H1 (cell line): ENCODE measurements at regions of chr7 and their contacts with region 1.

Region 1: DNA sequence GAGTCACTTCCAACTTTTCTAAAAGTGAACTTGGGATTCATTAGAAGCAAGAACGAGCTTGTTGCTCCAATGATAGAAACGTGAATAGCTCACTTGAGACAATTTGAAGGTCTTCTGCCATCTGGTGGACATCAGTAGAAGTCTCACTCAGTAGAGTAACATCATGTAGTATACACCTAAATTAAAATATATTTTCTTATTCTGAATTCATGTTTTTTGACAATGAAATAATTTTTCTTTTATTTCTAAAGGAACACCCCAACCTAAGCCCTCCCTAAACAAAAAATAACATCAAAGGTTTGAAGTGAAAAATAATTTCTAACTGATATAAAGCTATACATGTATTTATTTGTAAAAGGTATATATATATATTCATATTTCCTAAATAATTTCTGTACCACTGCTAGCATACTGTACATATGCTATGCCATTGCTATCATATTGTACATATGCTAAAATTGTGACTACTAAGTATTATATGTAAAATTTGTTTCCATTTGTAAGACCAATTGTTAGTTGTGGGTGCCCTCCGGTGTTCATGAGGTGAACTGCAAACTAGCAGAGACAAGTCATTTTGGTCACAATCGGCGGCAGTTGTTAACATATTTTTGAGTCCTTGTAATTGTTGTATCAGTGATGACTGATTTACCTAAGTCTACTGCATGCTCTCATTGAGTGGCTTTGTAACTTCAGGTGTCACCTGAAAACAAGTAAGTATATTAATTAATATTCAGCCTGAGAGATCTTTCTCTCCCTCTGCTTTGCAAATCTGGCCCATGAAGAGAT is 121.9 kb downstream of the PTPRZ1 start:
- DNase-seq: peak; percentile 29 to 68
- H3K4me3 ChIP-seq: no peak overlapping the region
- H3K27ac ChIP-seq: no peak overlapping the region
- H3K4me1 ChIP-seq: no peaks in the 10 kb centered on the region
- H3K27me3 ChIP-seq: no peaks in the 10 kb centered on the region
- CTCF ChIP-seq: peak; percentile 43 to 82 (median 75)
- EP300 ChIP-seq: no peak
- POLR2A ChIP-seq: no peak
- RAD21 ChIP-seq: peak; percentile 92 to 94

Region 2: DNA sequence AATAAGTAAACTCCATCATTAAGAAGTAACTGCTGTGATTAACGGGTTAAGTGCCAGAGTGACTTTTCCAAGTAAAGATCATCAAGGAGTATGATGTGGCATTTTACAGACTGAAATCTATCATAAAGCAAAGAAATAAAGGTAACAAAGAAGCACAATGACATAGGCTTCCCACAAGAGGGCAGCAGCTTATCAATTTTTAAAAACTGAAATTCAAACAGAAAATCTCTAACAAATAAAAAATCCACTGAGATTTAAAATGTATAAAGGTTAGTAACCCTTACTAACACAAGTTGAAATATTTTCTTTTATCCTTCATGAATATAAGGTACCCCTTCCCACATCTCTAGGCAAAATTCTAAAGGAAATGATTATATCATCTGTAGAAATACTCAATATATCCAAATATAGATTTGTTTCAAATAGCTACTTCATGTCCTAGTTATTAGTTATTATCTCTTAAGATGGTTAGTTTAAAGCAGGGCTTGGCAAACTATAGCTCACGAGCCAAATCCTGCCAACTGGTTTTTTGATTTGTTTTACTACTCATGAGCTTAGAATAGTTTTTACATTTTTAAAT is 627.9 kb before region 1 on chr7:
- CTCF ChIA-PET with region 1: interaction called, 18 read pairs
- POLR2A ChIA-PET with region 1: no interaction called
- DNase-seq: no peak
- H3K4me3 ChIP-seq: no peak overlapping the region
- H3K27ac ChIP-seq: no peak overlapping the region
- H3K4me1 ChIP-seq: peaks cover 0 to 2% (median 0%) of the 10 kb centered on the region in 4 experiments; a peak in 3 of 7 replicates
- H3K27me3 ChIP-seq: no peaks in the 10 kb centered on the region
- CTCF ChIP-seq: peak in 2 of 3 experiments; percentile 40 to 56; a peak in 2 of 4 replicates
- EP300 ChIP-seq: no peak
- POLR2A ChIP-seq: no peak
- RAD21 ChIP-seq: peak in 1 of 2 experiments; percentile 72

Region 3: DNA sequence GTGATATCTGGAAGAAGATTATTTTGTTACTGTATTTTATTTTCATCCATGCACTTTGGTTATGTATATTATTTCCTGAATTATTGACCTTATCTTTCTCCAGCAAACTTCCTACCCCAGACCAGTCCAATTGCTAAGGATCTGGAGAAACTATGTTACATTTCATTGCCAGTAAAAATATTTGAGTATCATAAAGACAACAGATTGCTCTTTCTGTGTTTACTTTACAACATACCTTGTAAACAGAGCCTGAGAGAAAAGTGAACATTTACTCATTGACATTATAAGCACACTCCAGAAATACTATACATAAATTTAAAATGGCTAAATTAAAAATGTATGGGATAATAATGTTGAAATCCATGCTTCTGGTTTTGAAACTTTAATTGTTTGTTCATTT is 412.6 kb before region 1 on chr7:
- CTCF ChIA-PET with region 1: interaction called, 14 read pairs
- POLR2A ChIA-PET with region 1: no interaction called
- DNase-seq: no peak
- H3K4me3 ChIP-seq: no peak overlapping the region
- H3K27ac ChIP-seq: no peak overlapping the region
- H3K4me1 ChIP-seq: no peaks in the 10 kb centered on the region
- H3K27me3 ChIP-seq: no peaks in the 10 kb centered on the region
- CTCF ChIP-seq: no peak
- EP300 ChIP-seq: no peak
- POLR2A ChIP-seq: no peak
- RAD21 ChIP-seq: no peak

Region 4: GRCh38 chr7:121752706-121753105 is 242.1 kb before region 1 on chr7:
- CTCF ChIA-PET with region 1: interaction called, 45 read pairs
- POLR2A ChIA-PET with region 1: no interaction called
- DNase-seq: no peak
- H3K4me3 ChIP-seq: no peak overlapping the region
- H3K27ac ChIP-seq: no peak overlapping the region
- H3K4me1 ChIP-seq: peaks cover 0 to 8% (median 0%) of the 10 kb centered on the region in 4 experiments; a peak in 3 of 7 replicates
- H3K27me3 ChIP-seq: no peaks in the 10 kb centered on the region
- CTCF ChIP-seq: peak in 2 of 3 experiments; percentile 51 to 62; a peak in 3 of 4 replicates
- EP300 ChIP-seq: no peak
- POLR2A ChIP-seq: no peak
- RAD21 ChIP-seq: peak; percentile 76 to 80

Region 5: GRCh38 chr7:121876656-121877500 is 117.9 kb before region 1 on chr7:
- CTCF ChIA-PET with region 1: interaction called, 13 read pairs
- POLR2A ChIA-PET with region 1: interaction called, 5 read pairs
- DNase-seq: no peak
- H3K4me3 ChIP-seq: peak overlapping the region in 2 of 4 experiments; percentile 13 to 94; a peak in 3 of 8 replicates
- H3K27ac ChIP-seq: no peak overlapping the region; the same call in 1 of the 2 replicates
- H3K4me1 ChIP-seq: peaks cover 4 to 19% (median 19%) of the 10 kb centered on the region in 4 experiments; a peak in 5 of 7 replicates
- H3K27me3 ChIP-seq: no peaks in the 10 kb centered on the region
- CTCF ChIP-seq: no peak
- EP300 ChIP-seq: no peak
- POLR2A ChIP-seq: no peak
- RAD21 ChIP-seq: no peak

Region 6: DNA sequence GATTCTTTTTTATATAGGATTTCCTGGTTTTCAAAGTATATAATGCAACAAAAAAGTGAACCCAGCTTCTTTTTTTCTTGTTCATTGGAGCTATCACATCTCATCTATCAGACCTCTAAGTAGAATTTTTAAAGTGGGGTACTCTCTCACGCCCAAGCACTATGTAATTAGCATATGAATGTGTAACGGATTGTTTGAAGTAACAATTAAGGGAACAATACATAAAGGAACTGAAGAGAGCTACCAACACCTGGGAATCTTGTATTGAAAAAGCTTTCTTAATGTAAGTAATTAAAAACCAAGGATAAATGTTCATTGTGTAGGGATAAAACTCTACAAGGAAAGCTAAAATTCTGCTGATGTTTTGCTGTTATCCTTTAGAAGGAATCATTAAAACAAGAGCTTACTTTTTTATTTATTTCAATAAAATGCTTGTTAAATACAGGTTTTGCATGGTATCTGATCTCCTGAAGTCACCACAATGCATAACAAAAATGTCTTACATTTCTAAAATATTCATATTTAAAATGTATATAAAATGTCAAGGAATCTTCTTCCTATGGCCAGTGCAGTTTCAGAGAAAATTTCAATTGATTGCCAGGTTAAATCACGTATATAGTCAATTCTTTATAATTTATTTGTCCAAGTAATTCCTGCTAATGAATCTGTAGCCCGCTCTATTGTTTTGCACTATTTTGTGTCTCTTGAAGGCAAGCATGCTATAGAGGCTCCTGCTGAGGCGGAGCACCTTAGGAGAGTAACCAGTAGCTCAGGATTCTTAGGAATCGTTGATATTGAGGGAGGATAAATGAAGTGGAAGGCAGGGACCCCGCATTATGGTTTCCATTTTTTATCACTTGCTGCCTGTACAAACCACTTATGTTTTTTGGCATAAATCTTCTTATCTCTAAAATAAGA is 70.3 kb before region 1 on chr7:
- CTCF ChIA-PET with region 1: interaction called, 13 read pairs
- POLR2A ChIA-PET with region 1: interaction called, 3 read pairs
- DNase-seq: no peak
- H3K4me3 ChIP-seq: peak overlapping the region in 1 of 4 experiments; percentile 39; a peak in 1 of 8 replicates
- H3K27ac ChIP-seq: no peak overlapping the region
- H3K4me1 ChIP-seq: peaks cover 0 to 15% (median 8%) of the 10 kb centered on the region in 4 experiments; a peak in 5 of 7 replicates
- H3K27me3 ChIP-seq: no peaks in the 10 kb centered on the region
- CTCF ChIP-seq: no peak
- EP300 ChIP-seq: no peak
- POLR2A ChIP-seq: no peak
- RAD21 ChIP-seq: no peak

Region 7: GRCh38 chr7:121954803-121955202 is 40.0 kb before region 1 on chr7:
- CTCF ChIA-PET with region 1: interaction called, 11 read pairs
- POLR2A ChIA-PET with region 1: no interaction called
- DNase-seq: no peak
- H3K4me3 ChIP-seq: no peak overlapping the region
- H3K27ac ChIP-seq: no peak overlapping the region
- H3K4me1 ChIP-seq: peaks cover 0 to 16% (median 5%) of the 10 kb centered on the region in 4 experiments; a peak in 4 of 7 replicates
- H3K27me3 ChIP-seq: no peaks in the 10 kb centered on the region
- CTCF ChIP-seq: no peak
- EP300 ChIP-seq: no peak
- POLR2A ChIP-seq: no peak
- RAD21 ChIP-seq: no peak